Posterior cingulate gyrus (tissue), 11 donors: ENCODE measurements at regions of chr1 and their contacts with region 1.

Region 1: GRCh38 chr1:163315773-163316374 is 5.9 kb upstream of the NUF2 start:
- DNase-seq: peak in 3 of 10 donors; percentile 7 to 17 (median 13)

Region 2: DNA sequence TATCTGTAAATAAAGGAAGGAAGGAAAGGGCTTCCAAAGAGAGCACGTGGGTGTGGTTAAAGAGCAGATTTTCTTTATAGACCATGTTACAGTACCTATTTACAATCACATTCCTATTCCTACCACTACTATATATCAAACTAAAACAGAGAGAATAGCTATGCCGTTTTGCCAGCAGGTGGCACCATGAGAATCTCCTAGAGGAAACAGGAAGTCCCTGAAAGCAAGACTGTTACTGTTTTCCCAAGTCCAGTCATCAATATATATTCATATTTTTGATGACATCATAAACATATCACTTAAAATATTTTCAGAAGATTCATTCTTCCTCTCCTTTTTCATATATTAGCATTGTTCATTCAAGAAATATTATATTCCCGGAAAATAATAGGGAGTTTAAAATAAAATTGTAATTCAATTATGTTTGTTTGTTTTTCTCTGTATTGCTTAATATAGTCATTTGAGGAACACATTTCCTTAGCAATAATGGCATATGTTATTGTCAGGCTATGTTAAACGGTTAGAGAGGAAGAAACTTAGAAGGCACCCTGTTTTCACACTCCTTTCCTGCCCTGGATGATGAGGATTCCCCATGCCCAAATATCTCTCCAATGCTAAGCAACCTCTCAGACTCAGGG is 461.5 kb before region 1 on chr1:
- intact Hi-C with region 1: loop called (anchors 1 kb)
- DNase-seq: peak in 8 of 10 donors; percentile 17 to 91 (median 68)

Region 3: DNA sequence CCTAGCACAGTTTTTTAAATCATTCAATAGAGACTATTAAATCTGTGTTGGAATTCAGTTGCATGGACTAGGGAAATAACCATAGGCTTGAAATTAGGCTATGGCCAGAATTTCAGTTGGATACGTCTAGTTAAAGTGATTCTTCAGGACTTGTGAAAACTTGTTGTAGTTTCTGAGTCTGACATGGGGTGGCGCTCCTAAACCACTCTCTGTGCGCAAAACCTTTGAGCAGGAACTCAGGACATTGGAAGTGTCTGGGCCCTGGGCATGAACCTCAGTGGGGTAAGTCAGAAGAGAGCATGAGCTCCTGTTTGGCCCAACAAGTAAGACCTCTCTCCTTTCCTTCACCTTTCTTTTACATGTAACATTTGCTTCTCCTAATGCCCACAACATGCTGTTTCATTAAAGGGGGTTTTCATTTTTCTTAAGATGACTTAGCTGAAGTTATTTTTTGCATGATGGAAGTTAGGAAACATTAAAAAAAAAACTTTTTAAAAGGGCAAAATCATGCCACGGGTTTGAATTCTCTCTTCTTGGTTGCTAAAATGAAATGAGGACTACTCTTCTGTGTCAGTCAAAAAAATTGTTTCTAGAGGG is 437.8 kb before region 1 on chr1:
- intact Hi-C with region 1: loop called (anchors 5 kb)
- DNase-seq: peak in 9 of 10 donors; percentile 14 to 89 (median 63)

Region 4: GRCh38 chr1:163071405-163072255 is 244.2 kb before region 1 on chr1:
- intact Hi-C with region 1: loop called (anchors 5 kb)
- DNase-seq: peak in 8 of 10 donors; percentile 25 to 91 (median 60)

Region 5: GRCh38 chr1:163213626-163214025 is 102.2 kb before region 1 on chr1:
- intact Hi-C with region 1: no loop called
- DNase-seq: no peak

Region 6: GRCh38 chr1:163504331-163504978 is 188.6 kb after region 1 on chr1:
- intact Hi-C with region 1: no loop called
- DNase-seq: peak in 1 of 10 donors; percentile 67